ENCODE measurements at regions of chr5 and their contacts with region 1.

Region 1: DNA sequence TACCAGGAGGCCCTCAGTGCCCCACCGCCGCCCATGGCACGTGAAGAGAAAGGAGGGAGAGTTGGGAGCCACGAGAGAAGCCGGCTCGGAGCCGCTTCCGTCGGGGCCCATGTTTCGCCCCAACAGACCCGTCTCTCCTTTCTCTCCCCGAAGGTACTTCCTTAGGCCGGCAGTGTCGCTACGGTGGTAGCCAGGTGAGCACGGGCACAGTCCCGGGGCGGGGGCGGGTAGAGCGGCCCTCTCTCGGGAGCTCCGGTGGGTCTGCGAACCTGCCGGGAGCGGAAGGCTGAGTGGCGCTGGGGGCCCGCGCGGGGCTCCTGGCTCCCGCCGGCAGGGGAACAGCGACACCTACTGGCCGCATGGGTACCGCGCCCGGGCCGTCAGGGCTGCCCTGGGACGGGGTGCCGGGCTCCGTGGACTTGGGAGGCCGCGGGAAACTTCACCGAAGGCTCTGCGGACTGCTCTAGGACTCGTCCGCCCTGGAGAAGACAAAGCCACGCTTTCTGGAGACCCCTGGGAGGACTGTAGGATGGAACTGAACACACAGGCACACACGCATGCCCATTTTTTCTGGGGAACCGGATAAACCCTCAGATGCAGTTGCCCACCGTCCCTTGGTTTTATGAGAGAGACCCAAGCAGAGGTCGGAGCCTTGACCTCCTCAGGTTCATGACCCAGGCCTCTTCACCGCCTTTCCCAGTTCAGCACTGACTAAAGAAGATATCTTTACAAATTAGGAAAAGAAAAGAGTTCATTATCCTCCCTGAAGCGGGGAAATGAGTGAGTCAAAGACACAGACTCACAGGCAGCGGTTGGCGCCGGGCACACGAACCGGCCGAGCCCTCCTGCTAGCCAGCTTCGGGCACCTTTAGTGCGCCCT is 202.5 kb downstream of the MEF2C start:
- DNase-seq: peak; percentile 83
- H3K4me3 ChIP-seq: peak overlapping the region; percentile 41
- H3K27ac ChIP-seq: no peak overlapping the region
- H3K4me1 ChIP-seq: peaks cover 23% of the 10 kb centered on the region
- H3K27me3 ChIP-seq: peaks cover 37% of the 10 kb centered on the region
- CTCF ChIP-seq: peak; percentile 96

Region 2: GRCh38 chr5:87899721-87900131 is 780.8 kb before region 1 on chr5:
- CTCF ChIA-PET with region 1: no interaction called
- POLR2A ChIA-PET with region 1: no interaction called
- intact Hi-C with region 1: loop called (anchors 5 kb)
- DNase-seq: peak; percentile 68
- H3K4me3 ChIP-seq: no peak overlapping the region
- H3K27ac ChIP-seq: no peak overlapping the region
- H3K4me1 ChIP-seq: peaks cover 12% of the 10 kb centered on the region
- H3K27me3 ChIP-seq: peaks cover 5% of the 10 kb centered on the region
- CTCF ChIP-seq: no peak

Region 3: DNA sequence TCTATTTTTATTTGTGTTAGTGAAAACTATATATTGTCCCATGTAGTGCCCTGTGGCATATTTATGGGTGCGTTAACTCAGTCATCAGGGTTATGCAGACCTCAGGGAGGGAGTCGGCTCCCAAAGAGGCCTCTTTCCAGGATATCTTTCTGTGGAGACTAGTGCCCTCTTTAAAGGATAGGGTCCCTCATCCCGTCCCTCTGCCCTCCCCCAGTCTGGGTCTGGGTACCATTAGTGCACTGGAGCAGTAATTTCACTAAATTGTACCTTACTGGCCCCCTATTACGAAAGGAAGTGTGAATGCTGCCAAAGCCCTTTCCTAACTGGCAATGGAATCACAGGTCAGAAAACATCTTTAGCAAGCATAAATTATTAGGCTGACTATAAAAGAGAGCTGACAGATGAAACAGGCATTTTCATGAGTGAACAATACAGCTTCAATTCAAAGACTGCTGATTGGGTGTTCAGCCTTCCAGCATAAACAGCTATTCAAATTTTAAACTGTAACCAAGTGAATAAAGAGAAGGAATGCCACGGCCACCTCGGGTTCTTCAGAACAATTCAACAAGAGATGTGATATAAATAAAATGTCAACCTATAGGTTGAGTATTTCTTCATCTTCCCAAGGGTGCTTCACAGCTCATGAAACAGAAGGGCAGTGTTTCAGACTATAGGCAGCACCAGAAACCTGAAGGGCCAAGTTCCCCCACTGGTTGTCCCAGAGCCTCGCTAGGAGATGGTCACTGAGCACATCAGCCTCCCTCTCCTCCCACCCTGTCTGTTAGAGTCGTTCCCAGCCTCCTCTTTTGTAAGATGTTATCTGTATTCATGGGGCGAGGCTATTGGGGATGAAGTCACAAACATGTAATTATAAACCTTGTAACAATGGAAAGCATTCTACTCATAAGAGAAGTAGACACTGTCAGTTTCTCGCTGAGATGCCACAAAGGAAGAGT is 730.5 kb before region 1 on chr5:
- CTCF ChIA-PET with region 1: no interaction called
- POLR2A ChIA-PET with region 1: no interaction called
- intact Hi-C with region 1: loop called (anchors 5 kb)
- DNase-seq: no peak
- H3K4me3 ChIP-seq: no peak overlapping the region
- H3K27ac ChIP-seq: no peak overlapping the region
- H3K4me1 ChIP-seq: peaks cover 24% of the 10 kb centered on the region
- H3K27me3 ChIP-seq: peaks cover 35% of the 10 kb centered on the region
- CTCF ChIP-seq: no peak

Region 4: GRCh38 chr5:88140856-88141752 is 539.4 kb before region 1 on chr5:
- CTCF ChIA-PET with region 1: interaction called, 13 read pairs
- POLR2A ChIA-PET with region 1: no interaction called
- intact Hi-C with region 1: loop called (anchors 2 kb)
- DNase-seq: peak; percentile 99
- H3K4me3 ChIP-seq: peak overlapping the region; percentile 56
- H3K27ac ChIP-seq: peak overlapping the region; percentile 49
- H3K4me1 ChIP-seq: no peaks in the 10 kb centered on the region
- H3K27me3 ChIP-seq: no peaks in the 10 kb centered on the region
- CTCF ChIP-seq: peak; percentile 67

Region 5: GRCh38 chr5:88602584-88602983 is 77.9 kb before region 1 on chr5:
- CTCF ChIA-PET with region 1: interaction called, 13 read pairs
- POLR2A ChIA-PET with region 1: no interaction called
- intact Hi-C with region 1: no loop called
- DNase-seq: peak; percentile 2
- H3K4me3 ChIP-seq: no peak overlapping the region
- H3K27ac ChIP-seq: no peak overlapping the region
- H3K4me1 ChIP-seq: no peaks in the 10 kb centered on the region
- H3K27me3 ChIP-seq: no peaks in the 10 kb centered on the region
- CTCF ChIP-seq: peak; percentile 53

Region 6: DNA sequence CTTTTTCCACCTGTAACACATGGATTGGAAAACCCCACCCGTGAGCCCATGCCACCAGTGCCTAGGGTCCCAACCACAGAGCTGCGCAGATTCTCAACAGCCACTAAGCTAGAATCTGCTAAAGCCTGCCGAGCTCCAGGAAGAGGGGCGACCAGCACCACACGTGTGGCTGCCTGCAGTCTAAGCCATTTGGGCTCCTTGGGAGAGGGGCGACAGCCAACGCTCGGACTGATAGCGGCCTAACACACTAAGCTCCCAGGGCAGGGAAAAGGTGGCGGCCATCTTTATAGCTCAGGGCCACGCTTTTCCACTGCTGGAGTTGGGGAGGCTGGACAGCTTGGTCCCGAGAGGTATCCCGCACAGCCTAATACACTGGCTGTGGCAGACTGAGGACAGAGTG is 1097.2 kb after region 1 on chr5:
- CTCF ChIA-PET with region 1: no interaction called
- POLR2A ChIA-PET with region 1: no interaction called
- intact Hi-C with region 1: no loop called
- DNase-seq: no peak
- H3K4me3 ChIP-seq: no peak overlapping the region
- H3K27ac ChIP-seq: no peak overlapping the region
- H3K4me1 ChIP-seq: no peaks in the 10 kb centered on the region
- H3K27me3 ChIP-seq: no peaks in the 10 kb centered on the region
- CTCF ChIP-seq: no peak